BJ (cell line): ENCODE measurements at regions of chr1 and their contacts with region 1.

Region 1: GRCh38 chr1:164565357-164565756 is 6.4 kb downstream of the PBX1 start:
- DNase-seq: no peak
- H3K4me3 ChIP-seq: no peak overlapping the region
- H3K27me3 ChIP-seq: no peaks in the 10 kb centered on the region
- CTCF ChIP-seq: no peak

Region 2: GRCh38 chr1:164602480-164603093 is 37.2 kb after region 1 on chr1:
- CTCF ChIA-PET with region 1: interaction called, 3 read pairs
- POLR2A ChIA-PET with region 1: interaction called, 12 read pairs
- DNase-seq: peak; percentile 47
- H3K4me3 ChIP-seq: no peak overlapping the region
- H3K27me3 ChIP-seq: no peaks in the 10 kb centered on the region
- CTCF ChIP-seq: no peak

Region 3: DNA sequence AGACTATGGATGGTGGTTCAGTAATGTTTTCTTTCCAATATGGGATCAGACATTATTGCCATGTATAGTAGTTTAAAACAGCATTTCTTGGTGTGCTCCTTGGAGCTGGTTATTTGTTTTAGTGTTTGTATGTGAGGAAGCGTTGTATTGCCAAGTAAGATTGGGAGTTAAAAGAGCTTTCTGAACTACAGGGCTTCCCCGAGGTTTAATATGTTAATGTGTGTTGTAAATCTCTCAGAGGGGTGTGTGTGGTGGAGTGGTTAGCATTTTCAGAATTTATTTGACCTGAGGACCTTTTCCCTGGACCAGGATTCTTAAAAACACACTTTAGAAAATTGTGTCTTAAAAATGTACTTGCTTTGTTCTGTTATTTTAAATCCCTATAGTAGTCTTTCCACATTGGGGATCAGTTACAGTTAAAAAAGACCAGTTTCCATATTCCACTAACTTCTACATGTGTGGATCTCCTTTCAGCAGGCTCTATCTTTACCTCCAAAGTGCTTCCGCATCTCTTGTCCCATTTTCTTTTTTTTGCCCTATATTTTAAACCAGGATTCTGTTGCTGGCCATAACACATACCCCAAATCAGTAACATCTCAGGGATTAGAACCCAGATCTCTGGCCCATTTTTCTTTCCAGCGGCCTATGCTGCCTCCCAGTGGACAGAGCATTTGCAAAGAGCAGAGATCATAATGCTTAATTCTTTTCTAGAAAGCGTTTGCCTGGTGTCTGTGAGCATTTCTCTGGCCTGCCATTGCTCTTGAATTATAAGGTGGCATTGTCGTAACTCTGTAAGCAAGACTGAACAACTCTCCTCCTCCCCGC is 52.2 kb after region 1 on chr1:
- CTCF ChIA-PET with region 1: interaction called, 3 read pairs
- POLR2A ChIA-PET with region 1: interaction called, 13 read pairs
- DNase-seq: no peak
- H3K4me3 ChIP-seq: no peak overlapping the region
- H3K27me3 ChIP-seq: no peaks in the 10 kb centered on the region
- CTCF ChIP-seq: peak; percentile 53